Activated T-helper 2 cell treated with anti-CD3 and anti-CD28 coated beads, Interferon-gamma antibody, Interleukin-2, Interleukin-4, amounts not matched to agents 10 μg/mL and 5 μg/mL and 100 μg/mL, durations not matched to agents 14 hours and 24 hours and 36 hours (primary cell): ENCODE measurements at regions of chr2 and their contacts with region 1.

Region 1: GRCh38 chr2:192162392-192163042 is 32.2 kb downstream of the TMEFF2 start:
- DNase-seq: peak; percentile 20
- H3K4me3 Mint-ChIP-seq: no peak overlapping the region
- H3K27ac Mint-ChIP-seq: no peak overlapping the region
- H3K4me1 Mint-ChIP-seq: peaks cover 11% of the 10 kb centered on the region
- H3K27me3 Mint-ChIP-seq: peaks cover 24% of the 10 kb centered on the region

Region 2: GRCh38 chr2:191555092-191555742 is 607.3 kb before region 1 on chr2:
- intact Hi-C with region 1: loop called (anchors 1 kb)
- DNase-seq: peak; percentile 68
- H3K4me3 Mint-ChIP-seq: no peak overlapping the region
- H3K27ac Mint-ChIP-seq: no peak overlapping the region
- H3K4me1 Mint-ChIP-seq: peaks cover 13% of the 10 kb centered on the region
- H3K27me3 Mint-ChIP-seq: peaks cover 14% of the 10 kb centered on the region

Region 3: GRCh38 chr2:191691016-191691735 is 471.3 kb before region 1 on chr2:
- intact Hi-C with region 1: loop called (anchors 5 kb)
- DNase-seq: no peak
- H3K4me3 Mint-ChIP-seq: no peak overlapping the region
- H3K27ac Mint-ChIP-seq: peak overlapping the region; percentile 70
- H3K4me1 Mint-ChIP-seq: peaks cover 43% of the 10 kb centered on the region
- H3K27me3 Mint-ChIP-seq: no peaks in the 10 kb centered on the region

Region 4: DNA sequence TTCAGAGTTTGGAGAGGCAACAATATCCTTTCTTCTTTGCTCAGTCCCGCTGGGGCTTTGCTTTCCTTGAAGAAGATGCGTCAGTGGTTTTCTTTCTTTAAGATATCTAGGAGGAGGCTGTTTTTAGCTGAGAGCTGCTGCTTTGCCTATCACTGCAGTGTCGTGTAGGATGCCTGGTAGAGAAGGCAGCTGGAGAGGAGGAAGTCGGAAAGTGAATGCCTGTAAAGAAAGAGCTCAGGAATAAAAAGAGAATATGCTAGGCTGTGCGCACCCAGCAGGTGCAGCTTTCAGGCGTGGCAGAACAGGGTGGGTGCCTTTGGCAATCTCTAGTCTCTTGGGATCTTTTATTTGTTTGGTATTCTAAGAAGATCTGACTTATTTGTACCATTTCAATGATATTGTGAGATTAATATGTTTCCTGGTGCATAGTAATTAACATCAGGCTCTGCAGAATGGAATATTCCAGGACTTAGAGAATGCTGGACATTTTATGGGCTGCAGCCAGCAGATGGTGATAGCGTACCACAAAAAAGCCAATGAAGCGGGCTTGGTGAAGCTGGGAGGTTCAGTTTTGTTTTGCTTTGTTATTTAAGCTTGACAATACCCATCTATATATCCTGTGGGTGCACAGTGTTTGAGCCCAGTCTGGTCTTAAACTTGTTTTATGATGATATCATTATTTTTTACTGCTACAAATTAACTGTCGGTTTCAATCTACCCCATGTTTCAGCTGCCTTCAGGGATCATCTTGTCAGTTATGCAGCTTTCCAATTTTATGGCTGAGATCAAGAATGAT is 350.5 kb before region 1 on chr2:
- intact Hi-C with region 1: loop called (anchors 2 kb)
- DNase-seq: no peak
- H3K4me3 Mint-ChIP-seq: no peak overlapping the region
- H3K27ac Mint-ChIP-seq: no peak overlapping the region
- H3K4me1 Mint-ChIP-seq: no peaks in the 10 kb centered on the region
- H3K27me3 Mint-ChIP-seq: peaks cover 5% of the 10 kb centered on the region